ENCODE measurements at regions of chr6 and their contacts with region 1.

Region 1: DNA sequence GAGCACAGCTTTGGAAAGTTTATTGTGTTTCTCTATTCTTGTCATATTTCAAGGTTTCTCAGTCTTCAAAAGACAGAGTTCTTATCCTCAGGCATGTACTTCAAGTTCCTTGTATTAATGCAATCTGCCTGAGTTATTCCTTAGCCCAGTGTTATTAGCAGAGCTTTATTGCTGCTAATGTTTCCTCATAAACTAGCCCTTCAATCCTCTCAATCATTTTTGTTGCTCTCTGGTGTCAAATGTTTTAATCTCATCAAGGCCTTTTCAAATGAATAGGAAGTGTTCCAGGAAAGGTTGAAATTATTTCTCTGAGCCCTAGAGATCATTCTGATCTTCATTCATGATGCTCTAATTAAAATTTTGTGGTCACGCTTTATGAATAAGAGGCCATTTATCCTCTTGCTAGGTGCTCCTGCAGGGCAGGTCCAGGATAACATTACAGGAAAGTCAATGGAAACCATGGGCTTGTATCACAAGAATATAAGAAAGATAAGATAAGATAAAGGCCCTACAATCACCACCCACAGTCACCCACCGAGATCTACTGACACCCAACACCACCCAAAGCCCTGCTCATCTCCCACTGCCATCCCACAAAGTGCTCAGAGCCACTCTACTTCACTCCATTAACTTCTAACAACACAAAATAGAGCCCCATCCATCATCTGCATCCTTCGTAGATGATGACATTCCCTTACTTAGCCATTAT is 125.9 kb downstream of the COL9A1 start:
- DNase-seq: no peak
- H3K4me3 ChIP-seq: no peak overlapping the region
- H3K27ac ChIP-seq: no peak overlapping the region
- H3K4me1 ChIP-seq: no peaks in the 10 kb centered on the region
- H3K27me3 ChIP-seq: no peaks in the 10 kb centered on the region
- CTCF ChIP-seq: no peak

Region 2: DNA sequence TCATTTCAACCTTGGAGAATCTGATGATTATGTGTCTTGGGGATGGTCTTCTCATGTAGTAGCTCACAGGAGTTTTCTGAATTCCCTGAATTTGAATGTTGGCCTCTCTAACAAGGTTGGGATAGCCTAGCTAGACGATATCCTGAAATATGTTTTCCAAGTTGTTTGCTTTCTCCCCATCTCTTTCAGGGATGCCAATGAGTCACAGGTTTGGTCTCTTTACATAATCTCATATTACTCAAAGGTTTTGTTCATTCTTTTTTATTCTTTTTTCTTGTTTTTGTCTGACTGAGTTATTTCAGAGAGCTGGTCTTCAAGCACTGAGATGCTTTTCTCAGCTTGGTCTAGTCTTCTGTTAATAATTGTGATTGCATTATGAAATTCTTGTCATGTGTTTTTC is 168.6 kb after region 1 on chr6:
- intact Hi-C with region 1: no loop called
- DNase-seq: no peak
- H3K4me3 ChIP-seq: no peak overlapping the region
- H3K27ac ChIP-seq: no peak overlapping the region
- H3K4me1 ChIP-seq: no peaks in the 10 kb centered on the region
- H3K27me3 ChIP-seq: no peaks in the 10 kb centered on the region
- CTCF ChIP-seq: no peak

Region 3: DNA sequence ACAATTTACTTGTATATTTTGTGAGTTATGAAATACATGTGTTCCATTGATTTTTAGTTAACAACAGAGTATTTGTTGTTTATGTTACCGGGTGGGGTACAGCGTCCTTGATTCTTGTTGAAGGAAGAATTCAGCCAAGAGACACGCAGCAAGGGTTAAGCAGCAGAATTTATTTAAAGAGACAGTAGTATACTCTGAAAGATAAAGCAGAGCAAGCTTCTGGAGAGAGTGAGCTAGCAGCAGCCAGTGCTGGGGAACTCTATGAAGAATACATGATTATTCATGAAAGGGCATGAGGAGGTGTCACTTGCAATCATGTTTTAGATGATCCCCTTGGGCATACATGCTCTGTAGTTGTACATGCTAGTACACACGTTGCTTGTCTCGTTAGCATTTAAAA is 312.4 kb after region 1 on chr6:
- intact Hi-C with region 1: no loop called
- DNase-seq: no peak
- H3K4me3 ChIP-seq: no peak overlapping the region
- H3K27ac ChIP-seq: no peak overlapping the region
- H3K4me1 ChIP-seq: no peaks in the 10 kb centered on the region
- H3K27me3 ChIP-seq: no peaks in the 10 kb centered on the region
- CTCF ChIP-seq: no peak

Region 4: DNA sequence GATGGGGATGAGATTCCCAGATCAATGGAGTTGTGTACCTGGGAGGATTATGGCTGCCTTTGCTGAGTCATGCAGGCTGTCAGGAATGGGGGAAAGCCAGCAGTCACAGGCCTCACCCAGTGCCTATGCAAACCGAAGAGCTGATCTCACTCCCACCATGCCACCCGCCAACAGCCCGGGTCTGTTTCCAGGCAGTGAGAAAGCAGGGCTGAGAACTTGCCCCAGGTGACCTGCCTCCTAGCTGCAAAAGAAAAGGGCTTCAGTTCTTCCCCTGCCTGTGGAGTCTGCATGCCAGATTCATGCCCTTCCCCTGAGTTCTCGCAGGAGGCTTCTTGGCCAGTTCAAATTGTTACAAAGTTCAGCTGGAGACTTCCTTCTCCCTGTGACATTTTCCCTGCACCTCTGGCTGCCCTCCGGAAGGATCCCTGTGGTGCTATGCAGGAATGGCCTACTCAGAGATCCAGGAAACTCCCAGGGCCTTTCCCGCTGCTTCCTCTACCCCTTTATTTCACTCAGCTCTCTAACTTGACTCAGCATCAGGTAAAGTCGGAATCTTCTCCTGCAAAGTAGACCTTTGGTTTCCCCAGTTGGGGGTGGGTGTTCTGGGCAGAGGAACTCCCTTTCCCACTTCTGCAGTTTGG is 851.4 kb after region 1 on chr6:
- intact Hi-C with region 1: loop called (anchors 5 kb)
- DNase-seq: no peak
- H3K4me3 ChIP-seq: no peak overlapping the region
- H3K27ac ChIP-seq: no peak overlapping the region
- H3K4me1 ChIP-seq: no peaks in the 10 kb centered on the region
- H3K27me3 ChIP-seq: no peaks in the 10 kb centered on the region
- CTCF ChIP-seq: no peak